Heart left ventricle (tissue), 16 donors: ENCODE measurements at regions of chr22 and their contacts with region 1.

Region 1: GRCh38 chr22:38051900-38052862 is 5.0 kb upstream of the PICK1 start:
- DNase-seq: peak; percentile 71 to 89 (median 76)
- ATAC-seq: peak in 3 of 4 donors; percentile 74 to 79 (median 75)
- H3K4me3 ChIP-seq: no peak overlapping the region
- H3K27ac ChIP-seq: peak overlapping the region in 1 of 12 donors; percentile 24
- H3K4me1 ChIP-seq: peaks cover 0 to 16% (median 7%) of the 10 kb centered on the region in 12 donors
- H3K27me3 ChIP-seq: no peaks in the 10 kb centered on the region
- CTCF ChIP-seq: peak; percentile 73 to 91 (median 87)
- POLR2A ChIP-seq: no peak

Region 2: DNA sequence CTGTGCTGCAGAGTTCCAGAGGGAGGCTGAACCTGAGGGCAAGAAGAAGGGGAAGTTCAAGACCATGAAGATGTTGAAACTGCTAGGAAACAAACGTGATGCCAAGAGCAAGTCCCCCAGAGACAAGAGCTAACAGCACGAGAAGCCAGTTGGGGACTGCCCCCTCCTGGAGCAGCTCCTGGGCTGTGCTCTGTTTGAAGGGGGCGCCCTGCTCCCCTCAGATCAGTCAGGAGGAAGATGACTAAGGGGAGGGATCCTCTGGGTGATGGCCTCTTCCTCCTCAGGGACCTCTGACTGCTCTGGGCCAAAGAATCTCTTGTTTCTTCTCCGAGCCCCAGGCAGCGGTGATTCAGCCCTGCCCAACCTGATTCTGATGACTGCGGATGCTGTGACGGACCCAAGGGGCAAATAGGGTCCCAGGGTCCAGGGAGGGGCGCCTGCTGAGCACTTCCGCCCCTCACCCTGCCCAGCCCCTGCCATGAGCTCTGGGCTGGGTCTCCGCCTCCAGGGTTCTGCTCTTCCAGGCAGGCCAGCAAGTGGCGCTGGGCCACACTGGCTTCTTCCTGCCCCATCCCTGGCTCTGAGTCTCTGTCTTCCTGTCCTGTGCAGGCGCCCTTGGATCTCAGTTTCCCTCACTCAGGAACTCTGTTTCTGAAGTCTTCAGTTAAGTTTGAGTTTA is 111.3 kb before region 1 on chr22:
- intact Hi-C with region 1: no loop called
- DNase-seq: no peak
- ATAC-seq: peak in 1 of 4 donors; percentile 27
- H3K4me3 ChIP-seq: no peak overlapping the region
- H3K27ac ChIP-seq: peak overlapping the region in 1 of 12 donors; percentile 37
- H3K4me1 ChIP-seq: no peaks in the 10 kb centered on the region
- H3K27me3 ChIP-seq: no peaks in the 10 kb centered on the region
- CTCF ChIP-seq: no peak
- POLR2A ChIP-seq: no peak

Region 3: GRCh38 chr22:38012604-38013072 is 39.5 kb before region 1 on chr22:
- intact Hi-C with region 1: no loop called
- DNase-seq: no peak
- ATAC-seq: no peak
- H3K4me3 ChIP-seq: no peak overlapping the region
- H3K27ac ChIP-seq: no peak overlapping the region
- H3K4me1 ChIP-seq: peaks cover 0 to 24% (median 15%) of the 10 kb centered on the region in 12 donors
- H3K27me3 ChIP-seq: no peaks in the 10 kb centered on the region
- CTCF ChIP-seq: no peak
- POLR2A ChIP-seq: no peak

Region 4: GRCh38 chr22:38104084-38104483 is 51.9 kb after region 1 on chr22:
- intact Hi-C with region 1: loop called in 3 of 10 experiments (anchors 5 to 10 kb)
- DNase-seq: peak in 2 of 5 donors; percentile 18 to 34
- ATAC-seq: peak in 2 of 4 donors; percentile 27 to 50
- H3K4me3 ChIP-seq: no peak overlapping the region
- H3K27ac ChIP-seq: no peak overlapping the region
- H3K4me1 ChIP-seq: peaks cover 0 to 4% (median 0%) of the 10 kb centered on the region in 12 donors
- H3K27me3 ChIP-seq: no peaks in the 10 kb centered on the region
- CTCF ChIP-seq: peak in 8 of 12 donors; percentile 7 to 34 (median 30)
- POLR2A ChIP-seq: no peak

Region 5: DNA sequence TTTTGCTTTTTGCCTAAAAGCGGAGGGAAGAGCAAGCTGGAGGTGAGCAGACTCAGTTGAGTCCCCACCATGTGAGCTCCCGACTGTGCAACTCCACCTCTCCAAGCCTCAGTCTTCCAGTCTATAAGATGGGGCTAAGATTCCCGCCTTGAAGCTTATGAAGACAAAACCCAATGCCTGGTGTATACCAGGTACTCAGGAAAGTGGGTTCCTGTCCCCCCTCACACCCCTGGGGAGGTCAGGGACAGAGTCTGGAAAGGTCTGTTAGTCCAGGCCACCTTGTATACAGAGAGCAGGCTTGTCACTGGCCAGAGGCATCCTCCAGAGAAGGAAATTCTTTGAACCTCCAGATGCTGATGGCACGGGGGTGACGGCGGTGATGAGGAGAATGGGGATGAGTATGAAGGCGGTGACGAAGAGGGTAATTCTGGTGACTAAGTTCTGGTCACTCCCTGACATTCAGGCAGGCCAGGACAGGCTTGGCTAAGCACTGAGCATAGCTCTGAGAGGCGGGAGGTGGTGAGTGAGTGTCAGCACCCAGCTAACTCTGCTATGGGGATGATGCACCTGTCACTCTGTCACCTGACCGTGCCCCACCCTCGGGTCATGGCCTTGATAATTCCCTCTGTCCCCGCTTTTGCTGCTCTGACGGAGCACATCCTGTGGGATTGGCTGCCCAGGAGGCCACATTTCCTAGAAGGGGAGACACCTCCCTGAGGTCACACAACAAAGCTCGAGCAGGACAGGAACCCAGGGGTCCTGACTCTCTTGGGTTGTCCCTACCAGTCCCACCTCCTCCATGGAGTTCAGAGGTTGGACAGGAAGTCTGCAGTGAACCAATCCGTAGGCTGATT is 295.9 kb after region 1 on chr22:
- intact Hi-C with region 1: loop called in 7 of 10 experiments (anchors 2 to 10 kb)
- DNase-seq: peak in 1 of 5 donors; percentile 48
- ATAC-seq: peak in 2 of 4 donors; percentile 16 to 17
- H3K4me3 ChIP-seq: no peak overlapping the region
- H3K27ac ChIP-seq: no peak overlapping the region
- H3K4me1 ChIP-seq: peaks cover 0 to 7% (median 1%) of the 10 kb centered on the region in 12 donors
- H3K27me3 ChIP-seq: peaks cover 0 to 18% (median 0%) of the 10 kb centered on the region in 9 donors
- CTCF ChIP-seq: no peak
- POLR2A ChIP-seq: no peak

Region 6: GRCh38 chr22:38506118-38506962 is 454.2 kb after region 1 on chr22 and contains the start of gene DDX17:
- intact Hi-C with region 1: loop called in 1 of 10 experiments (anchors 10 kb)
- DNase-seq: peak; percentile 94 to 95 (median 94)
- ATAC-seq: peak; percentile 82 to 91 (median 86)
- H3K4me3 ChIP-seq: peak within 1 kb of the TSS; percentile 67 to 95 (median 91)
- H3K27ac ChIP-seq: peak within 1 kb of the TSS; percentile 98 to 100 (median 100)
- H3K4me1 ChIP-seq: peaks cover 5 to 44% (median 34%) of the 10 kb centered on the region in 12 donors
- H3K27me3 ChIP-seq: no peaks in the 10 kb centered on the region
- CTCF ChIP-seq: peak in 1 of 12 donors; percentile 28
- POLR2A ChIP-seq: peak; percentile 9 to 53
- total RNA-seq, gene DDX17: 149 to 202 (median 170) TPM

Region 7: DNA sequence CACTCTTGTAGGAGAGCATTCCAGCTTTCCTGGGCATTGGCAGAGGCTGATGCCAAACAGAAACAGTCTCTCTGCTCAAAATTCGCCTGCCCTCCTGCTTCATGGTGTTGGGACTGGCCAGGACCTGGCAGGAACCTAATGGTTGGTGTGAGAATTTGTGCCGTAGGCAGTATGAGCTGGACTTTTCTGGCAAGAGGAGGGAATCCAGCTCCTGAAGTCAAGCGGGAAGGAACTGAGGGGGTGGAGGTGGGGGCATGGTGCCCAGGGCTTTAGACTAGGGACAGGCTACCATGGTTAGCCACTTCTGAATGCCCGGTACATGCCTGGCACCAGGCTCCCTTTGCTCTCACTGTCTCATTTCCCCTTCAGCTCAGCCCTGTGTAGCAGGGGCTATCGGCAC is 622.7 kb after region 1 on chr22:
- intact Hi-C with region 1: loop called in 2 of 10 experiments (anchors 5 to 10 kb)
- DNase-seq: no peak
- ATAC-seq: peak; percentile 18 to 53 (median 32)
- H3K4me3 ChIP-seq: no peak overlapping the region
- H3K27ac ChIP-seq: peak overlapping the region in 1 of 12 donors; percentile 25
- H3K4me1 ChIP-seq: no peaks in the 10 kb centered on the region
- H3K27me3 ChIP-seq: no peaks in the 10 kb centered on the region
- CTCF ChIP-seq: no peak
- POLR2A ChIP-seq: no peak

Region 8: GRCh38 chr22:38705235-38706100 is 653.3 kb after region 1 on chr22 and contains the start of gene GTPBP1:
- intact Hi-C with region 1: loop called in 1 of 10 experiments (anchors 10 kb)
- DNase-seq: peak; percentile 98 to 100 (median 99)
- ATAC-seq: peak; percentile 88 to 96 (median 94)
- H3K4me3 ChIP-seq: peak within 1 kb of the TSS; percentile 71 to 99 (median 84)
- H3K27ac ChIP-seq: peak within 1 kb of the TSS; percentile 73 to 99 (median 94)
- H3K4me1 ChIP-seq: peaks cover 0 to 53% (median 37%) of the 10 kb centered on the region in 12 donors
- H3K27me3 ChIP-seq: no peaks in the 10 kb centered on the region
- CTCF ChIP-seq: peak in 4 of 12 donors; percentile 15 to 40 (median 30)
- POLR2A ChIP-seq: peak; percentile 94 to 97
- total RNA-seq, gene GTPBP1: 23.7 to 45.3 (median 28.1) TPM